Posterior vena cava (tissue), 2 donors: ENCODE measurements at regions of chr7 and their contacts with region 1.

Region 1: DNA sequence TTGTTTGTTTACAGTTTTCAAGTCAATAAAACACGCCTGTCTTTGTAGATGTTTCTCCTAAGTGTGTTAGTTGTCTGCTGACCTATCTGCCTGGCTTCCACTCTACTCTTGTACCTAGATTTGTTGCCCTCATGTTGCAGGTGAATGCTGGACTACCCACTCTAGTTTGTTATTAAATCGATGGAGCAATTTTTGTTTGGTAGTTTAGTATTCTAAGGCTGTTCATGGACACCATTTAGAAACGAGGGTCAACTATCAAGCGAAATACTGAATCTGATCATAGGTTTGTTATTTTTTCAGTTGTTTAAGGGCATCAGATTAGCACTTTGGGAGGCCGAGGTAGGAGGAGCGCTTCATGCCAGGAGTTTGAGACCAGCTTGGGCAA is 29.1 kb upstream of the MKLN1 start:
- DNase-seq: no peak

Region 2: DNA sequence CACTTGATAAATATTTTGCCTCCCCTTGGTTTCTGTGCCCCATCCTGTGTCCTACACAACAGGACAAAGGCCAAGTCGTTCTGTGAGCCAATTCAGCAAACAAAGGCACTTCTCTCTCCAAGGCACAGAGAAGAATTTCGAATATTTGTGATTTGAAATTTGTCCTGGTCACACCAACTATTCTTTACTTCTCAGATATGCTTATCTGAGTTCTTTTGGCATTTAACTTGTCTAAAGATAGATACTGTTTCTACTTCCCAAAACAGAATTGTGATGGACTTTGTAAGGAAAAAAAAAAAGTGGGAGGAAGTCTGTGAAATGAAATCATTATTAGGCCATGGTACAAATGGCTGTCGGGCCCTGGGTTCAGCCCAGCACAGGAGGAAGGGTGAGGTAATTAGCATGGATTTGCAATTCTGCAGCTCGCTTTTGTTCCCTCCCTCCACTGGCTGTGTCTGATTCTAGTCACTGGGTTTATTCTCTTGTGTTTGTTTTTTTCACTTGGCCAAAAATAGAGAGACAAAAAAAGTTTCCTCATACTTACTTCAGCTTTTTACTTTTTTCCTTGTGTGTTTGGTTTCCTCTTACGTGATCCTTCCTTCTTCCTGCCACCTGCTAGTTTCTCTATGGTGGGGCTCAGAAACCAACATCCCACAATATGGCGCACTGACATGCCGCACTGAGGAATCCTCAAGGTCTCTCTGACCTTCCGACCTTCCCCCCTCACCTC is 79.1 kb before region 1 on chr7:
- intact Hi-C with region 1: loop called in 1 of 2 experiments (anchors 2 kb)
- DNase-seq: peak; percentile 88